Ascending aorta (tissue), 2 donors: ENCODE measurements at regions of chr3 and their contacts with region 1.

Region 1: DNA sequence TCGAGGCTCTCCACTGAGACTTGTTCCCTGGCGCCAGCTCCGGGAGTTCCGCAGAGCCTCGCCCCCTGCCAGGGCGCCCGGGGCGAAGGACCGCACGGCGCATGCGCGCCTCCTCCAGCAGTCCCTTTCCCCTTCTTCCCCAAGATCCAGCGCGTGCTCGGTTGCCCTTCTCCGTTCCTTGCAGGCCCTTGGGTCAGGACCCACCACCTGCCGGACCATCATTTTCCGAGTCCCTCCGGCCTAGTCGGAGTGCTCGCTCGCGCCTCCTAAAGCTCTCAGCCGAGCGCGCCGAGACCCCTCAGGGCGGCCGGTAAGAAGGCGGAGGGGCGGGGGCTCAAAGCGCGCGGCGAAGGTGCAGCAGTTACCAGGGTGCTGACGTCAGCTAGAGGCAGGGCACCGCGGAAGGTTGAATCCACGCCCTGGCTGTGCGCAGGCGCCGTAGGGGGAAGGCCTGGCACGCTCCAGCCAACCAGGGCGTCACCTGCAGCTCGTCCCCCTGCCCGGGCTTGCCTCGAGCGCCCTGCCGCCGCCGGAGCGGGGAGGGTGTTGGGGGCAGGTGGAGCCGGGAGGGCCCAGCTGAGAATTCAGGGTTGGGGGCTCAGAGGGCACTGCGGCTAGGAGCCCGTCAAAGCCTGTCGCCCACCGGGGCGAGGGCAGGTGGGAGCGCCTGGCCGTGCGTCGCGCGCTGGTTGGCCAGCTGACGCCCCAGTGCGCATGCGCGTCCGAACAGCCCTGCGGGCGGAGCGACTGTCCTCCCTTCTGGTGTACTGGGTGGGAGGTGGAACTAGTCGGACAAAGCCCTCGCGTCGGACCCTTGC is at the start of gene TCAIM:
- DNase-seq: peak; percentile 90 to 99
- H3K4me3 ChIP-seq: peak within 1 kb of the TSS; percentile 64 to 84
- H3K27ac ChIP-seq: peak within 1 kb of the TSS; percentile 94
- H3K4me1 ChIP-seq: peaks cover 4 to 24% of the 10 kb centered on the region in 2 donors
- H3K27me3 ChIP-seq: no peaks in the 10 kb centered on the region
- CTCF ChIP-seq: no peak
- total RNA-seq, gene TCAIM: 17.0 TPM

Region 2: GRCh38 chr3:43621656-43622432 is 716.4 kb before region 1 on chr3 and contains the start of gene ANO10:
- intact Hi-C with region 1: loop called (anchors 5 kb)
- DNase-seq: peak; percentile 97 to 99
- H3K4me3 ChIP-seq: peak within 1 kb of the TSS; percentile 60 to 97
- H3K27ac ChIP-seq: peak within 1 kb of the TSS; percentile 88 to 92
- H3K4me1 ChIP-seq: peaks cover 0 to 10% of the 10 kb centered on the region in 2 donors
- H3K27me3 ChIP-seq: no peaks in the 10 kb centered on the region
- CTCF ChIP-seq: no peak
- total RNA-seq, gene ANO10: 24.9 TPM

Region 3: GRCh38 chr3:44355362-44356033 is 17.3 kb after region 1 on chr3:
- intact Hi-C with region 1: loop called (anchors 1 kb)
- DNase-seq: peak in 1 of 2 donors; percentile 68
- H3K4me3 ChIP-seq: no peak overlapping the region
- H3K27ac ChIP-seq: peak overlapping the region; percentile 73 to 76
- H3K4me1 ChIP-seq: peaks cover 0 to 12% of the 10 kb centered on the region in 2 donors
- H3K27me3 ChIP-seq: no peaks in the 10 kb centered on the region
- CTCF ChIP-seq: no peak

Region 4: GRCh38 chr3:44387404-44387803 is 49.2 kb after region 1 on chr3:
- intact Hi-C with region 1: no loop called
- DNase-seq: no peak
- H3K4me3 ChIP-seq: no peak overlapping the region
- H3K27ac ChIP-seq: no peak overlapping the region
- H3K4me1 ChIP-seq: no peaks in the 10 kb centered on the region
- H3K27me3 ChIP-seq: no peaks in the 10 kb centered on the region
- CTCF ChIP-seq: no peak

Region 5: GRCh38 chr3:44439499-44440295 is 101.5 kb after region 1 on chr3:
- intact Hi-C with region 1: loop called (anchors 5 kb)
- DNase-seq: peak; percentile 62 to 90
- H3K4me3 ChIP-seq: peak overlapping the region in 1 of 2 donors; percentile 37
- H3K27ac ChIP-seq: peak overlapping the region; percentile 78 to 87
- H3K4me1 ChIP-seq: peaks cover 4 to 14% of the 10 kb centered on the region in 2 donors
- H3K27me3 ChIP-seq: no peaks in the 10 kb centered on the region
- CTCF ChIP-seq: no peak

Region 6: GRCh38 chr3:44477312-44478030 is 139.3 kb after region 1 on chr3 and contains the start of gene ZNF445:
- intact Hi-C with region 1: loop called (anchors 5 kb)
- DNase-seq: peak; percentile 14 to 90
- H3K4me3 ChIP-seq: peak within 1 kb of the TSS; percentile 74 to 90
- H3K27ac ChIP-seq: peak within 1 kb of the TSS; percentile 42 to 68
- H3K4me1 ChIP-seq: peaks cover 0 to 13% of the 10 kb centered on the region in 2 donors
- H3K27me3 ChIP-seq: no peaks in the 10 kb centered on the region
- CTCF ChIP-seq: no peak
- total RNA-seq, gene ZNF445: 6.6 TPM

Region 7: GRCh38 chr3:44761424-44762169 is 423.4 kb after region 1 on chr3 and contains the starts of genes KIAA1143 and KIF15:
- intact Hi-C with region 1: loop called (anchors 5 kb)
- DNase-seq: peak; percentile 81 to 97
- H3K4me3 ChIP-seq: peak within 1 kb of the TSS; percentile 59 to 87
- H3K27ac ChIP-seq: peak within 1 kb of the TSS; percentile 7 to 56
- H3K4me1 ChIP-seq: peaks cover 0 to 5% of the 10 kb centered on the region in 2 donors
- H3K27me3 ChIP-seq: no peaks in the 10 kb centered on the region
- CTCF ChIP-seq: no peak
- total RNA-seq, gene KIAA1143: 12.0 TPM
- total RNA-seq, gene KIF15: 0.64 TPM

Region 8: GRCh38 chr3:44861412-44862220 is 523.4 kb after region 1 on chr3 and contains the start of gene TMEM42:
- intact Hi-C with region 1: loop called (anchors 5 kb)
- DNase-seq: peak; percentile 55 to 95
- H3K4me3 ChIP-seq: peak within 1 kb of the TSS; percentile 67 to 89
- H3K27ac ChIP-seq: peak within 1 kb of the TSS; percentile 91 to 96
- H3K4me1 ChIP-seq: peaks cover 0 to 11% of the 10 kb centered on the region in 2 donors
- H3K27me3 ChIP-seq: no peaks in the 10 kb centered on the region
- CTCF ChIP-seq: peak in 2 of 3 experiments; percentile 4 to 40
- total RNA-seq, gene TMEM42: not detected